Activated T-helper 1 cell treated with anti-CD3 and anti-CD28 coated beads, Interleukin-12 subunit alpha, Interleukin-12 subunit beta, Interleukin-2, Interleukin-4 antibody, amounts not matched to agents 30 ng/mL and 10 ng/mL and 1 ng/mL, durations not matched to agents 14 hours and 24 hours and 36 hours (primary cell): ENCODE measurements at regions of chr2 and their contacts with region 1.

Region 1: DNA sequence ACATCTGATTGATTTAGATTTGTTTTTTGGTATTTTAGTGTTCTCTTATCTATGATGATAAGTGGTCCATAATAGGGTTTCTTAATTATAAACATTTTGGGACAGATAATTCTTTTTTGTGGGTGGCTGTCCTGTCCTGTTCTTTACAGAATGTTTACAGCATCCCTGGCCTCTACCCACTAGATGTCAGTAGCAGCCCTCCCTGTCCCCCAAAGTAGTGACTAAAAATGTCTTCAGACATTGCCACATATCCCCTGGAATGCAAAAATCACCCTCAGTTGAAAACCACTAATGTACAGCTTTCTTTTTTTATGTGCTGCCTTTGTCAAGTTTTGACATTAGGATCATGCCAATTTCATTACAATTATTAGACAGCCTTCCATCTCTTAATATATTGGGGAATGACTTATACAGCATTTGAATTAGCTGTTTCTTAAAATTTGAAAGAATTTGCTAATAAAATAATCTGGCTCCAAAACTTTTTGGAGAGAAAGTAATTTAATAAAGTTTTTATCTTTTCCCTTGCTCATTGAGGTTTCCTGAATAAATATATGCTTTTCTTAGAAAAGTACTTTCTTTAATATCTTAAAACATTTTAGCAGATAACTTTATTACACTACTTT is 19.5 kb downstream of the WIPF1 start:
- DNase-seq: no peak
- H3K4me3 Mint-ChIP-seq: no peak overlapping the region
- H3K27ac Mint-ChIP-seq: no peak overlapping the region
- H3K4me1 Mint-ChIP-seq: peaks cover 60% of the 10 kb centered on the region
- H3K27me3 Mint-ChIP-seq: no peaks in the 10 kb centered on the region

Region 2: DNA sequence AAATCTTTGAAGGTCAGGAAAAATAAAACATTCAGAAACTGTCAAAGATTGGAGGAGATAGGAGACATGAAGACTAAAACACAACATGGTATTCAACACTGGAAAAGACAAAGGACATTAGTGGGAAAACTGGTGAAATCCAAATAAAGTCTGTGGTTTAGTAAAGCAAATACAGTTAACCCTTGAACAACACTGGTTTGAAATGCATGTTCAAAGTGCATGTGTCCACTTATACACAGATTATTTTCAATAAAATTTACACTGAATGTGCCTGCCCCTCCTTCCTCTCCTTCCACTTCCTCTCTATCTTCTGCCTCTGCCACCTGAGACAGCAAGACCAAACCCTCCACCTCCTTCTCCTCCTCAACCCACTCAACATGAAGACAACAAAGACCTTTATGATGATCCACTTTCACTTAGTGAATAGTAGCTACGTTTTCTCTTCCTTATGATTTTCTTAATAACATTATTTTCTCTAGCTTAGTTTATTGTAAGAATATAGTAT is 344.3 kb before region 1 on chr2:
- intact Hi-C with region 1: no loop called
- DNase-seq: no peak
- H3K4me3 Mint-ChIP-seq: no peak overlapping the region
- H3K27ac Mint-ChIP-seq: peak overlapping the region; percentile 14
- H3K4me1 Mint-ChIP-seq: peaks cover 12% of the 10 kb centered on the region
- H3K27me3 Mint-ChIP-seq: no peaks in the 10 kb centered on the region

Region 3: GRCh38 chr2:174682578-174683391 is 104.7 kb after region 1 on chr2:
- intact Hi-C with region 1: loop called (anchors 1 kb)
- DNase-seq: peak; percentile 57
- H3K4me3 Mint-ChIP-seq: peak overlapping the region; percentile 96
- H3K27ac Mint-ChIP-seq: peak overlapping the region; percentile 95
- H3K4me1 Mint-ChIP-seq: peaks cover 74% of the 10 kb centered on the region
- H3K27me3 Mint-ChIP-seq: no peaks in the 10 kb centered on the region

Region 4: GRCh38 chr2:174688079-174688478 is 110.0 kb after region 1 on chr2:
- intact Hi-C with region 1: loop called (anchors 1 kb)
- DNase-seq: no peak
- H3K4me3 Mint-ChIP-seq: no peak overlapping the region
- H3K27ac Mint-ChIP-seq: no peak overlapping the region
- H3K4me1 Mint-ChIP-seq: peaks cover 47% of the 10 kb centered on the region
- H3K27me3 Mint-ChIP-seq: no peaks in the 10 kb centered on the region